Naive thymus-derived CD4-positive, alpha-beta T cell (primary cell): ENCODE measurements at regions of chr7 and their contacts with region 1.

Region 1: GRCh38 chr7:101085162-101085987 is at the start of gene TRIM56:
- DNase-seq: peak; percentile 53 to 77 (median 74)
- ATAC-seq: peak; percentile 94
- H3K4me3 ChIP-seq: peak within 1 kb of the TSS; percentile 100
- H3K4me3 Mint-ChIP-seq: peak within 1 kb of the TSS; percentile 91 to 100 (median 98)
- H3K27ac ChIP-seq: peak within 1 kb of the TSS; percentile 97
- H3K27ac Mint-ChIP-seq: peak within 1 kb of the TSS; percentile 93 to 100 (median 99)
- H3K4me1 ChIP-seq: peaks cover 10 to 15% of the 10 kb centered on the region in 2 donors
- H3K4me1 Mint-ChIP-seq: peaks cover 14 to 43% (median 28%) of the 10 kb centered on the region in 7 donors
- H3K27me3 ChIP-seq: no peaks in the 10 kb centered on the region
- H3K27me3 Mint-ChIP-seq: peaks cover 0 to 6% (median 0%) of the 10 kb centered on the region in 5 donors
- total RNA-seq, gene TRIM56: 49.6 to 72.3 (median 68.0) TPM

Region 2: GRCh38 chr7:100342765-100343164 is 742.6 kb before region 1 on chr7:
- CTCF ChIA-PET with region 1: no interaction called
- POLR2A ChIA-PET with region 1: no interaction called
- intact Hi-C with region 1: no loop called
- DNase-seq: no peak
- ATAC-seq: no peak
- H3K4me3 ChIP-seq: no peak overlapping the region
- H3K4me3 Mint-ChIP-seq: no peak overlapping the region
- H3K27ac ChIP-seq: peak overlapping the region; percentile 38
- H3K27ac Mint-ChIP-seq: peak overlapping the region; percentile 49 to 90 (median 73)
- H3K4me1 ChIP-seq: peaks cover 4 to 9% of the 10 kb centered on the region in 2 donors
- H3K4me1 Mint-ChIP-seq: peaks cover 6 to 46% (median 34%) of the 10 kb centered on the region in 7 donors
- H3K27me3 ChIP-seq: no peaks in the 10 kb centered on the region
- H3K27me3 Mint-ChIP-seq: no peaks in the 10 kb centered on the region

Region 3: GRCh38 chr7:100642534-100642907 is 442.9 kb before region 1 on chr7:
- CTCF ChIA-PET with region 1: no interaction called
- POLR2A ChIA-PET with region 1: no interaction called
- intact Hi-C with region 1: no loop called
- DNase-seq: no peak
- ATAC-seq: peak; percentile 56
- H3K4me3 ChIP-seq: no peak overlapping the region
- H3K4me3 Mint-ChIP-seq: no peak overlapping the region
- H3K27ac ChIP-seq: no peak overlapping the region
- H3K27ac Mint-ChIP-seq: no peak overlapping the region
- H3K4me1 ChIP-seq: no peaks in the 10 kb centered on the region
- H3K4me1 Mint-ChIP-seq: peaks cover 0 to 2% (median 0%) of the 10 kb centered on the region in 7 donors
- H3K27me3 ChIP-seq: no peaks in the 10 kb centered on the region
- H3K27me3 Mint-ChIP-seq: peaks cover 0 to 9% (median 4%) of the 10 kb centered on the region in 5 donors

Region 4: DNA sequence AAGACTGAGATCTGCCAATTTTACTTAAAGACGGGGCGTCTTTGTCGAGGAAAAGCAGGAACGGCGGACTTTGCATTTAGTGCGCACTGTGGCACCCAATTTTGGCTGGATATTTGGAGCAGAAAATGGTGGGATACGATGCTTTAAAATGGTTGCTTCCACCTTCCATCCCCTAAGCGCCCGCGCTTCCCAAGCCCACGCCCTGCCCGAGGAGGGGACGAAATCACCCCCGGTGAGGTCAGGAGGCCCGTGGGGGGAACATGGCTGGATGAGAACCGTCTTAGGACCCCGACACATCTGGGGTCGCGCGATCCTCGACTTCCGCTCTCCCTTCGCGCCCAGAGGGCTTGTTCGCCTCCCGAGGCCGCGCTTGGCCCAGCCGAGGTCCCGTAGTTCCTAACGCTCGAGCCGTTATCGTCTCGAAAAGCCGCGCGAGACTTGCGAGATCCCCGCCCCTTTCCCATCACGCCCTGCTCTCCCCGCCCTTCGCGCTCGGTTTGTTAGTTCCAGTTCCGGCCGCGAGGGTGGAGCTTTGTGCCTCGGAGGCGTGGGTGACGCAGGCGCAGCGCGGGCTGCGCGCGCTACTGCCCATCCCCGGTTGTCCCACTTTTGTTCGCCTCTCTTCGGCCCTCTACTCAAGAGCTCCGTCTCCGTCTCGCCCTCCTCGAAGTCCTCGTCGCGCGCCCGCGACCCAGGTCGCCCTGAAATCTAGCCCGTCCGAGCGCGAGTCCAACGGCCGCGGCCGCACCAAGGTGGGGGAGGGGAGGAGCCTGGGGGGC is 210.6 kb before region 1 on chr7 and contains the start of gene SRRT:
- CTCF ChIA-PET with region 1: no interaction called
- POLR2A ChIA-PET with region 1: interaction called, 13 read pairs
- intact Hi-C with region 1: loop called in 1 of 2 experiments (anchors 1 kb)
- DNase-seq: peak; percentile 92 to 99 (median 97)
- ATAC-seq: peak; percentile 98
- H3K4me3 ChIP-seq: peak within 1 kb of the TSS; percentile 78
- H3K4me3 Mint-ChIP-seq: peak within 1 kb of the TSS; percentile 96 to 100 (median 98)
- H3K27ac ChIP-seq: peak within 1 kb of the TSS; percentile 94
- H3K27ac Mint-ChIP-seq: peak within 1 kb of the TSS; percentile 97 to 99 (median 98)
- H3K4me1 ChIP-seq: peaks cover 22 to 30% of the 10 kb centered on the region in 2 donors
- H3K4me1 Mint-ChIP-seq: peaks cover 27 to 55% (median 52%) of the 10 kb centered on the region in 7 donors
- H3K27me3 ChIP-seq: no peaks in the 10 kb centered on the region
- H3K27me3 Mint-ChIP-seq: no peaks in the 10 kb centered on the region
- total RNA-seq, gene SRRT: 212 to 271 (median 261) TPM

Region 5: DNA sequence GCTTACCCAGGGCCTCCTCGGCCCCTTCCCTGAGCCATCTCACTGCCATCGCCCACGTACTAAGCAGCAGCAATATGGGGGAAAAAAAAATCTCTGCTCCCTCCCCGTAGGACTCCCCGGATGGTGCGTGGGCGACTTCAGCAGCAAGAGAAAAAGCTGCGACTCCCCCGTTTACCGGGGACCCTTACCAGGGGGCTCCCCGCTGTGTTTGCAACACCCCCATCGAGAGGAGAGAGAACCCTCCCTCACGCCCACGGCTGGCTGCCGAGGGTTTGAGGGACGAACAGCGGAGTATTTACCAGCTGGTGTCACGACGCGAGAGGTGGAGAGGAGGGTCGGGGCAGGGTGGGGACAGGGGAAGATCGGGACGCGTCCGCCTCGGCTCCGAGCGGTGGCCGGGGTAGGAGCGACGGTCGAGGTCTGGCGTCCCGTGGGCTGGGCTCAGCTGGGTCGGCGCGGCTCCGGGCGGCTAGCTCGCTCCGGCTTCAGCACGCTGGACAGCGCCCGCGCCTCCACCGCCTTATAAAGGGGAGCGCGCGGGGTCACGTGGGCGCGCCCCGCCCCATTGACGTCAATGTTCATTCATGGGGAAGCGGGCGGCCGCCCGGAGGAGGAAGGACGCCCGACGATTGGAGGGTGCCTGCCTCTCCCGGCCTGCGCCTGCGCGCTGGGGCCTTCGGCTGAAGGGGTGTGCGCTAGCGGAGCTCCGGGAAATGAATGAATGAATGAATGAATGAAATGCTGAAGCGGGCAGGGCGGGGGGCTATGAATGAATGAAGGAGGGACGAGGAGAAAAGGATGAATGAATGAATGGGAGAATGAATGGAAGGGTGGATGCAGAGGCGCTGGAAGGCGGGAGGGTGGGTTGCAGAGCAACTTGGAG is 79.9 kb after region 1 on chr7 and contains the start of gene VGF:
- CTCF ChIA-PET with region 1: no interaction called
- POLR2A ChIA-PET with region 1: no interaction called
- intact Hi-C with region 1: no loop called
- DNase-seq: peak; percentile 84 to 97 (median 90)
- ATAC-seq: peak; percentile 93
- H3K4me3 ChIP-seq: peak within 1 kb of the TSS; percentile 10
- H3K4me3 Mint-ChIP-seq: peak within 1 kb of the TSS; percentile 58 to 92 (median 77)
- H3K27ac ChIP-seq: no peak within 1 kb of the TSS
- H3K27ac Mint-ChIP-seq: peak within 1 kb of the TSS; percentile 4 to 87 (median 73)
- H3K4me1 ChIP-seq: peaks cover 34 to 40% of the 10 kb centered on the region in 2 donors
- H3K4me1 Mint-ChIP-seq: peaks cover 39 to 56% (median 46%) of the 10 kb centered on the region in 7 donors
- H3K27me3 ChIP-seq: peaks cover 20 to 46% of the 10 kb centered on the region in 2 donors
- H3K27me3 Mint-ChIP-seq: peaks cover 55 to 70% (median 62%) of the 10 kb centered on the region in 5 donors
- total RNA-seq, gene VGF: 0.19 TPM in 1 of 5 experiments, not detected in the others